Activated T-helper 1 cell treated with anti-CD3 and anti-CD28 coated beads, Interleukin-12 subunit alpha, Interleukin-12 subunit beta, Interleukin-2, Interleukin-4 antibody, amounts not matched to agents 30 ng/mL and 10 ng/mL and 1 ng/mL, durations not matched to agents 14 hours and 24 hours and 36 hours (primary cell): ENCODE measurements at regions of chr20 and their contacts with region 1.

Region 1: DNA sequence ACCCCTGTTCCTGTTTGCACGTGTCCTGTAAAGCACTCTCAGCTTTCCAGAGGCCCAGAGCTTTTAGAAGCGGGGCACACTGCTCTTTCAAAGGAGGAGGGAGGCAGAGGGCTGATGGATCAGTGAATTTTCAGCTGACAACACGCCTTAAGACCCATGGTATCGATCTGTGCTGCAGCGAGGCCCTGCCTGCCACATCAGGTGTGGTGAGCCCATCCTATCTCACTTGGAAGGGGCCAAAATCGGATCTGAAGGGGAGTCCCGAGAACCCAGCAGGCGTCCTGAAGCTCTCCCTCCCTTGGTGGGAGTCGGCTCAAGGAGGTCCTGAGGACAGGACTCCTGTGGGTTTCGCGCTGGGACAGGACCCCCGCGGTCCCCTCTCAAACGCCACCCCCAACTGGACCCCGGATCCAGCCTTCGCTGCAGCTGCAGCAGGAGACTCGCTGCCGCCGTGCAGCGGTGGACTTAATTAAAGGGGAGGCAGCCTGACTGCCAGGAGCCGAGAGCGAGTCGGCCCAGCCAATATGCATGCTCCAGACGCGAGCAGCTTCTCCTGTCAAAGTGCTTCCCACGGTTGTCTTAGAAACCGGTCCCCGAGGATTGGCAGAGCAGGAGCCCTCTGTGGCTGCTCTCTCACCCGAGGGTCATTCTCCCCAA is 580.0 kb upstream of the ZNF337 start:
- DNase-seq: no peak
- H3K4me3 Mint-ChIP-seq: no peak overlapping the region
- H3K27ac Mint-ChIP-seq: no peak overlapping the region
- H3K4me1 Mint-ChIP-seq: peaks cover 22% of the 10 kb centered on the region
- H3K27me3 Mint-ChIP-seq: no peaks in the 10 kb centered on the region

Region 2: GRCh38 chr20:26308961-26309360 is 32.3 kb after region 1 on chr20:
- intact Hi-C with region 1: loop called (anchors 1 kb)
- DNase-seq: no peak
- H3K4me3 Mint-ChIP-seq: peak overlapping the region; percentile 15
- H3K27ac Mint-ChIP-seq: peak overlapping the region; percentile 59
- H3K4me1 Mint-ChIP-seq: peaks cover 29% of the 10 kb centered on the region
- H3K27me3 Mint-ChIP-seq: no peaks in the 10 kb centered on the region